ENCODE measurements at regions of chr2 and their contacts with region 1.

Region 1: DNA sequence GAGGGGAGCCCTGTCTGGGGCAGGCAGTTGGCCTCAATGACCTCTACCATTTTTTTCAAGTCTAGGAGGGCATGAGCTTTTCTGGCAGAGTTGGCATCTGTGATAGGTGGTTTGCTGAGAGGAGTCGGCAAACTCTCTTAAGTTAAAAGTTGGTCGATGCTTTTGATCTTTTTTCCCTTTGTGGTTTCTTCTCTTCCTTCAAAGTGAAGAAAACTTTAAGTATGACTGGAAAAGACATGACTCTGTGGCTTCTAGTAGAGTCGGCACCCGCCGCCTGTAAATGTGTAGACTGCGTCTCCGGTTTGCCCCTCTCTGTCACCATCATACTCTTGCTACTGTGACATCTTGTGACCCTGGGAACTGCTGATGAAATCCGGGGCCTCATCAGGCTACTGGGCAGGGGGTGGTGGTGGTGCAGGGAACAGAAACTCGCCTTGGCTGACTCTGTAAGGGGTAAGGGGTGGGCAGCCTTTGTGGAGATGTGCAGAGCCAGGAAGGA is 21.1 kb downstream of the INPP5D start:
- DNase-seq: peak; percentile 58
- H3K4me3 Mint-ChIP-seq: peak overlapping the region; percentile 55
- H3K27ac Mint-ChIP-seq: peak overlapping the region; percentile 82
- H3K4me1 Mint-ChIP-seq: peaks cover 70% of the 10 kb centered on the region
- H3K27me3 Mint-ChIP-seq: no peaks in the 10 kb centered on the region

Region 2: DNA sequence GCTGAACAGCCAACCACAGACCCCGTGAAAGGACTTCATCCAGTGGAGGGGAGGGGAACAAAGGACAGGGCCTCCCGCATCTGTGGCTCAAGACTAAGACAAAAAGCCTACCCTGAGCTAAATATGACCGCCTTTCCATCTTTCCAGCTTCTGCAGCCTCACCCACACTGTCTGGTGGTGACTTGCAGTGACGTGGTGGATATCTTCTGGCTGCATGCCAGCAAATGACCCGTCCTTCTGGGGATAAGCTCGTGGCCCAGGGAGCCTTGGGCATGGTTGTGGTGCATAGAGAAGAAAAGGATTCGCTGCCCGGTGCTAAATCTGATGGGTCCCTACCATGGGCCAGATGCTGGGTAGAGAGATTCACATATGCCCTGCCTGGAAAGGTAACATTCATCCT is 59.5 kb before region 1 on chr2:
- intact Hi-C with region 1: no loop called
- DNase-seq: no peak
- H3K4me3 Mint-ChIP-seq: no peak overlapping the region
- H3K27ac Mint-ChIP-seq: no peak overlapping the region
- H3K4me1 Mint-ChIP-seq: no peaks in the 10 kb centered on the region
- H3K27me3 Mint-ChIP-seq: peaks cover 4% of the 10 kb centered on the region

Region 3: GRCh38 chr2:233096006-233096405 is 14.7 kb after region 1 on chr2:
- intact Hi-C with region 1: loop called (anchors 2 kb)
- DNase-seq: no peak
- H3K4me3 Mint-ChIP-seq: no peak overlapping the region
- H3K27ac Mint-ChIP-seq: no peak overlapping the region
- H3K4me1 Mint-ChIP-seq: peaks cover 48% of the 10 kb centered on the region
- H3K27me3 Mint-ChIP-seq: no peaks in the 10 kb centered on the region

Region 4: DNA sequence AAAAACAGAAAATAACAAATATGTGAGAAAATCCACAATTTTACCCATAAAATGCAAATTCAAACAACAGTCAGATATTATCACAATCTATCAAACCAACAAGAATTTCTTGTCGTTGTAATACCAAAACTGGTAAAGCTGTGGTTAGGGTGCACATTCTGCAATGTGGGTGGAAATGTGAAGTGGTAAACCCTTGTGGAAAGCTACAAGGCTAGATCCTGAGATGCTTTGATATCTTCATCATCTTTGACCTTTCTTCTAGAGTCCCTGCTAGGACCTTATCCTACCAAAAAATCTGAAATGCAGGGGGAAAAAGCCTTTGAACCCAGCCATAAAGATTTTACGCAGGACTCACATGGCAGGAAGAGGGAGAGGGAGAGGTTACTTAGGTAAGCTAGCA is 153.0 kb after region 1 on chr2:
- intact Hi-C with region 1: loop called (anchors 1 kb)
- DNase-seq: peak; percentile 32
- H3K4me3 Mint-ChIP-seq: peak overlapping the region; percentile 62
- H3K27ac Mint-ChIP-seq: peak overlapping the region; percentile 92
- H3K4me1 Mint-ChIP-seq: peaks cover 62% of the 10 kb centered on the region
- H3K27me3 Mint-ChIP-seq: no peaks in the 10 kb centered on the region